ENCODE measurements at regions of chr10 and their contacts with region 1.

Region 1: DNA sequence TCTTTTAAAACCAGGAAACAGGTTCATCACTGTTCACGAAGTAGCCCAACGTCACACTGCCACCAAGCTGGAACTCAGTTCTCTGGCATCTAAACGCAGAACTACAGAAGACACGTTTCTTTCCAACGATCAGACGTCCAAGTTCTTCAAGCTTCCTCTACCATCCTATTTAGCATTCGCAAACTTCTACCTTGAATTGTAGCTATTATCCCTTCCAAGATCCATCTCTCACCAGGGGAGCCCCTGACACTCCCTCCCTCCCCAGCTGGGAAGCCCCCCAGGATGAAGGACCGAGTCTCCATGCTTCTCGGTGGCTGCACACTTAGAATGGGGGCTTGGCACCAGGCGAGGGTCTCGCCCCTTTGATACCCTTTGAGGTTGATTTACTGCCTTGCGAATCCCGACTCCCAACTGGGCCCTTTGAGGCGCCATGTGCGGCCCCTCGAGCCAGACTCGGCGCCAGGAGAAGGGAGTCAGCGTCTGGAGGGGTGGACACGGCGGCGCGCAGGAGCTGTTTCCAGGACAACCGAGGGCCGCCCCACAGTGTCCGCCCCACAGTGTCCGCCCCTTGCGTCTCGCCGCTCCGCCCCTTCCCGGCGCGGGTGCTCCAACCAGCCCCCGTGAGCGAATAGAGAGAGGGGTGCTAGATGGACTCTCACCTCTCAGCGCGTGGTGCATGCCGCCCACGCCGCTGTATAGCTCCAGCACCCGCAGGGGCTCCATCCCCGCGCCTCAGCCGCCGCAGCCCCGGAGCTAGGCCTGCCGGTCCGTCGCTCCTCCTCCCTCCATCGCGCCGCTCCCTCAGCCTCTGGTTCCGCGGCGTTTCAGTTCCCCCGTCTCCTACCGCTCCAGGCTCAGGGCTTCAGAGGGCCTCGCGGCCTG is at the start of gene TRDMT1:
- DNase-seq: peak; percentile 87 to 92 (median 89)
- H3K4me3 ChIP-seq: peak within 1 kb of the TSS; percentile 65
- H3K27ac ChIP-seq: peak within 1 kb of the TSS; percentile 87 to 91
- H3K4me1 ChIP-seq: no peaks in the 10 kb centered on the region
- H3K27me3 ChIP-seq: no peaks in the 10 kb centered on the region
- CTCF ChIP-seq: peak in 1 of 3 donors; percentile 27
- EP300 ChIP-seq: peak; percentile 24
- POLR2A ChIP-seq: peak; percentile 91
- total RNA-seq, gene TRDMT1: 13.1 to 24.3 (median 17.9) TPM

Region 2: GRCh38 chr10:17001961-17002749 is 199.0 kb before region 1 on chr10:
- intact Hi-C with region 1: loop called in 1 of 4 experiments (anchors 10 kb)
- DNase-seq: peak; percentile 63 to 82 (median 70)
- H3K4me3 ChIP-seq: no peak overlapping the region
- H3K27ac ChIP-seq: peak overlapping the region; percentile 11 to 95
- H3K4me1 ChIP-seq: peaks cover 26% of the 10 kb centered on the region
- H3K27me3 ChIP-seq: no peaks in the 10 kb centered on the region
- CTCF ChIP-seq: no peak
- EP300 ChIP-seq: peak; percentile 78
- POLR2A ChIP-seq: no peak

Region 3: GRCh38 chr10:17122726-17123661 is 78.2 kb before region 1 on chr10:
- intact Hi-C with region 1: loop called in 1 of 4 experiments (anchors 10 kb)
- DNase-seq: no peak
- H3K4me3 ChIP-seq: no peak overlapping the region
- H3K27ac ChIP-seq: no peak overlapping the region
- H3K4me1 ChIP-seq: peaks cover 1% of the 10 kb centered on the region
- H3K27me3 ChIP-seq: no peaks in the 10 kb centered on the region
- CTCF ChIP-seq: no peak
- EP300 ChIP-seq: no peak
- POLR2A ChIP-seq: no peak

Region 4: GRCh38 chr10:17326377-17326776 is 125.2 kb after region 1 on chr10:
- intact Hi-C with region 1: no loop called
- DNase-seq: no peak
- H3K4me3 ChIP-seq: no peak overlapping the region
- H3K27ac ChIP-seq: no peak overlapping the region
- H3K4me1 ChIP-seq: no peaks in the 10 kb centered on the region
- H3K27me3 ChIP-seq: no peaks in the 10 kb centered on the region
- CTCF ChIP-seq: no peak
- EP300 ChIP-seq: no peak
- POLR2A ChIP-seq: no peak